ENCODE measurements at regions of chr10 and their contacts with region 1.

Region 1: DNA sequence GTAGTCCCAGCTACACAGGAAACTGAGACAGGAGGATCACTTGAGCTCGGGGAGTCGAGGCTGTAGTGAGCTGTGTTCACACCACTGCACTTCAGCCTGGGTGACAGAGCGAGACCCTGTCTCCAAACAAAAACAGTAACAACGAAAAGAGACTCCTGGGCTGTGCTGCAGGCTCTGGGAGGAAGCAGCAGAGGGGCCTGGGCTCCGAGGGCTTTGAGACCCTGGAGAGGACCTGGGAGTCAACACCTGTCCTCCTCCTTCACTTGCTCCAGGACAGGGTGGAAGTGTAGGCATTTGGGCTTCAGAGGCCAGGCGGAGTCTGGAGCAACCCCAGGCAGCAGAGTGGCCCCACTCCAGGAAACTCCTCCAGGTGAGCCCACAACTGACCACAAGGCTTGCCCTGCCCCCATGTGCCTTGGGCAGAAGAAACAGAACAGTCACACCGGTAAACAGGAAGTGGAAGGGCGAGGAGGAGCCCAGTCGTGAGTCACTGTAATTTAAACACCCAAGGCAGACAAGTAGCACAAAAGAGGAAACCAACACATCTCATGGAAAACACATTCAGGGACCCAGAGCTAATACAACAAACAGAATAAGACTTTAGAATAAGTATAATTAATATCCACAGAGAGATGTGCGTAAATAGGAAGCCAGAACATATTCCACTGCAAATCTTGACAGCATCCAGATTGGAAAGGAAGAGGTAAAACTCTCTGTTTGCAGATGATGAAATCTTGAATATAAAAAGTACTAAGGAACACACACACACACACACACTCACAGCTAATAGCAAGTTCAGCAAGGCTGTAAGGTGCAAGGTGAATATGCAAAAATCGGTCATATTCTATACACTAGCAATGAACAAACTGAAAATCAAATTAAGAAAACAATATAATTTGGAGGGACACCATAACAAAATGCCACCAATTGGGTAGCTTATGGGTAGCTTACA is 20.5 kb upstream of the RASGEF1A start:
- DNase-seq: peak in 3 of 9 donors; percentile 26 to 66 (median 37)
- ATAC-seq: peak; percentile 79
- H3K4me3 ChIP-seq: peak overlapping the region; percentile 21
- H3K4me3 Mint-ChIP-seq: peak overlapping the region; percentile 2 to 75 (median 64)
- H3K27ac ChIP-seq: no peak overlapping the region
- H3K27ac Mint-ChIP-seq: peak overlapping the region; percentile 62 to 94 (median 84)
- H3K4me1 ChIP-seq: peaks cover 16 to 25% of the 10 kb centered on the region in 2 donors
- H3K4me1 Mint-ChIP-seq: peaks cover 19 to 61% (median 26%) of the 10 kb centered on the region in 7 donors
- H3K27me3 ChIP-seq: no peaks in the 10 kb centered on the region
- H3K27me3 Mint-ChIP-seq: peaks cover 0 to 25% (median 4%) of the 10 kb centered on the region in 5 donors

Region 2: DNA sequence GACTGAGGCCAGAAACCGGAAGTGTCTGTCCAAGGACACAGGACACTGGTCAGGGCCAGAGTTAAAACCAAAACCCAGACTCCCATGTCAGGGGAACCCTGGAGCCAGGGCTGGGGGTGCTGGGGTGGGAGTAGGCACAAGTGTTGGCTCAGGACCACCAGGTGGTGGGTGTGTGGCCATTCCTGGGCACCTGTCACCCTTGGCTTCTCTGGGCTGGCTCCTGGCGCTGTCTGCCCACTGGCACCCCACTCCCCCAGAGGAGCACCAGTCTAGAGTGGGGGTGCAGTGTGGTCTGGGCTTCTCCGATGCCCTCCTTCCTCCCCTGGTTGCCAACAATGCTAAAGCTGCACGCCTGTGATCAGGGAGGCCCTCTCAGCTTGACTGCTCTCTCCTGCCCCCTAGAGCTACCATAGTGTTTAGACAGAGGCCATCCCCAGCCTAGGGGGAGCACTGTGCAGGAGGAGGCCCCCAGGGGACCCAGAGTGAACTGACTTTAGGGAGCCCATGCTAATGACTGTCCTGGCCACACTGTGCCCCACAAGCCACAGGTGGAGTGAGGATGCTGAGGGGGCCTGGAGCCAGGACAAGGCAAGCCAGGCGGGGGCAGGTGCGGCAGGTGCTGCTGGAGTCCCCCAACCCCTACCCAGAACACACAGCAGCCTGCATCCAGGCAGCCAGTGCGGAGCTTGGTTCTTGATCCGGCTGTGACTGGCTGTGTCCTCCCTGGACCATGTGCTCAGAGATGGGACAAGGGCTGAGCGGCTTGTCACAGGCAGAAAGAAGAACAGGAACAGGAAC is 31.5 kb before region 1 on chr10:
- CTCF ChIA-PET with region 1: no interaction called
- POLR2A ChIA-PET with region 1: no interaction called
- intact Hi-C with region 1: no loop called
- DNase-seq: peak in 1 of 9 donors; percentile 14
- ATAC-seq: peak; percentile 65
- H3K4me3 ChIP-seq: no peak overlapping the region
- H3K4me3 Mint-ChIP-seq: no peak overlapping the region
- H3K27ac ChIP-seq: no peak overlapping the region
- H3K27ac Mint-ChIP-seq: no peak overlapping the region
- H3K4me1 ChIP-seq: peaks cover 0 to 26% of the 10 kb centered on the region in 2 donors
- H3K4me1 Mint-ChIP-seq: peaks cover 5 to 20% (median 6%) of the 10 kb centered on the region in 7 donors
- H3K27me3 ChIP-seq: no peaks in the 10 kb centered on the region
- H3K27me3 Mint-ChIP-seq: peaks cover 0 to 4% (median 0%) of the 10 kb centered on the region in 5 donors

Region 3: GRCh38 chr10:43265799-43266721 is 21.3 kb before region 1 on chr10:
- CTCF ChIA-PET with region 1: no interaction called
- POLR2A ChIA-PET with region 1: no interaction called
- intact Hi-C with region 1: loop called in 1 of 2 experiments (anchors 1 kb)
- DNase-seq: peak in 2 of 9 donors; percentile 21 to 31
- ATAC-seq: peak; percentile 56
- H3K4me3 ChIP-seq: peak overlapping the region; percentile 53
- H3K4me3 Mint-ChIP-seq: peak overlapping the region; percentile 65 to 84 (median 74)
- H3K27ac ChIP-seq: no peak overlapping the region
- H3K27ac Mint-ChIP-seq: peak overlapping the region in 1 of 9 donors; percentile 52
- H3K4me1 ChIP-seq: peaks cover 0 to 4% of the 10 kb centered on the region in 2 donors
- H3K4me1 Mint-ChIP-seq: peaks cover 0 to 12% (median 4%) of the 10 kb centered on the region in 7 donors
- H3K27me3 ChIP-seq: peaks cover 0 to 11% of the 10 kb centered on the region in 2 donors
- H3K27me3 Mint-ChIP-seq: peaks cover 46 to 59% (median 54%) of the 10 kb centered on the region in 5 donors

Region 4: DNA sequence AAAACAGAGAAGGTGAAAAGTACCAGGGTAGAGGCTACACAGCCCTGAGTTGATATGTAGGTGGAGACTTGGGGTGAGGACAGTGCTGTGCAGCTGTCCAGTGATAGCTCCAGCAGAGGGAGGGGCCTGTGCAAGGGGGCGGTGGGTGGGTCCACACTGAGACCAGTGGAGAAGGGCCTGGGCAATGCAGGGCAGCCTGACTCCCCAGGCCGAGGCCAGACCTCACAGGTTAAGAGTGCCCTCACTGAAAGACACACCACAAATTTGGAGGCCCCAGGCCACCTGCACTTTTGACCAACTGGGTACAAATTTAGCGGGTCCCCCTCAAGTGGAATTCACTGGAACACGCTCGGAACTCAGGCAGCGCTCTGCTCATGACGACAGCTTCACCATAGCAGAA is 13.8 kb before region 1 on chr10:
- CTCF ChIA-PET with region 1: no interaction called
- POLR2A ChIA-PET with region 1: interaction called, 4 read pairs
- intact Hi-C with region 1: loop called in 1 of 2 experiments (anchors 2 kb)
- DNase-seq: no peak
- ATAC-seq: no peak
- H3K4me3 ChIP-seq: no peak overlapping the region
- H3K4me3 Mint-ChIP-seq: no peak overlapping the region
- H3K27ac ChIP-seq: no peak overlapping the region
- H3K27ac Mint-ChIP-seq: no peak overlapping the region
- H3K4me1 ChIP-seq: no peaks in the 10 kb centered on the region
- H3K4me1 Mint-ChIP-seq: peaks cover 0 to 5% (median 0%) of the 10 kb centered on the region in 7 donors
- H3K27me3 ChIP-seq: no peaks in the 10 kb centered on the region
- H3K27me3 Mint-ChIP-seq: peaks cover 46 to 82% (median 59%) of the 10 kb centered on the region in 5 donors